ENCODE measurements at regions of chrX and their contacts with region 1.

Region 1: GRCh38 chrX:49096419-49096818 is 16.7 kb upstream of the WDR45 start:
- DNase-seq: no peak
- H3K4me3 ChIP-seq: no peak overlapping the region
- H3K27ac ChIP-seq: no peak overlapping the region
- H3K4me1 ChIP-seq: no peaks in the 10 kb centered on the region
- H3K27me3 ChIP-seq: no peaks in the 10 kb centered on the region
- CTCF ChIP-seq: no peak
- EP300 ChIP-seq: no peak
- POLR2A ChIP-seq: no peak

Region 2: DNA sequence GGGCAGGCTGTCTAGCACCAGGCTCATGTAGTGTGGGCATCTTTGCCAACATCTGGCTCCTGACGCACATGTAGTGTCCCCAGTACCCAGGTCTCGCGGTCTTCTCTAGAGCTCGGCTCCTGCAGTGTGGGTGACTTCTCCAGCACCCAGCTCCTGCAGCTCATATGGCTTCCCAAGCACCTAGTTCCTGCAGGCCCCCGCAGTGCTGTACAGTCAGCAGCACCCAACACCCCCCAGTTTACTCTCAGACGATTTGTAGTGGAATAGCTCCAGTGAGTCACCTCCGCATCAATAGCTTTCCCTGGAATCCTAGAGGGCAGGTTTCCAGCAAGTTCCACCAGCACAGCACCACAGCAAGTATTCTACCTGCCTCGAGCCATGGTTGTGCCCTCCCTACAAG is 1644.3 kb before region 1 on chrX:
- intact Hi-C with region 1: loop called in 1 of 4 experiments (anchors 5 kb)
- DNase-seq: no peak
- H3K4me3 ChIP-seq: no peak overlapping the region
- H3K27ac ChIP-seq: no peak overlapping the region
- H3K4me1 ChIP-seq: no peaks in the 10 kb centered on the region
- H3K27me3 ChIP-seq: no peaks in the 10 kb centered on the region
- CTCF ChIP-seq: no peak
- EP300 ChIP-seq: no peak
- POLR2A ChIP-seq: no peak

Measured in ovary (tissue), 10 donors.